PC-9 (cell line): ENCODE measurements at regions of chr7 and their contacts with region 1.

Region 1: DNA sequence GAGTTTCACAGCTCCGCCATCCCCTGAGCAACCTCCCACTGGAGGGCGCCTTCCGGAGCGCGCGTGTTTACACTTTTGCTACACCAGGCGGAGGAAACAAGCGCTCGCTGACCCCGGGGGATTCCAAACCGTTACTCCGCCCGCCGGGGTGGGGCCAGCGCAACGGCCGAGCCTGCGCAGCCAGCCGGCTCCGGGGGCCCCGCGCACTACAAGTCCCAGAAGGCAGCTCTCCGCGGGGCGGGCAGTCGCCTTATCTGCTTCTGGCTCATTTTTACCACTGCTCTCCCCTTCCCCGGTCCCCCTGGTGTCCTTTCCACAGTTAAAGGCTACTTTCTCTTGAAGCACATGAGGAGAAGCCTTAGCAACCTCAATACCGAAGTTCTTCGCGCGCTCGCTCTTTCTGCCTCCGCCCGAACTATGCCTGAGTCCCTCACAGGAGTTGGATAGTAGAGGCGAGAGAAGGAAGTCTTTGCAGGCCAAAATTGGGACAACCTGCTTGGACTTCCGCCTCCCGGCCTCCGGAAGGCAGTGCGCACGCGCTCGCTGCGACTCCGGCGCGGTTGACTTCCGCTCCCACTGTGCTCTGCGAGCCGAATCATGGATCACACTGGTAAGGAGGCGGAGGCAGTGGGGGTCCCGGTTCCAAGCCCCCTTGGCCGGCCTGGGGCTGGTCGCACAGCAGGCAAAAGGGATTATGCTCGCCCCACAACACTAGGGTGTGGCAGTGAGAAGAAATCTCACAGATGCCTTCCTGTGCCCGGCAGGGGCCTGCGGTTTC is at the start of gene CBLL1:
- DNase-seq: peak; percentile 84 to 98
- H3K4me3 ChIP-seq: peak within 1 kb of the TSS; percentile 72
- H3K27ac ChIP-seq: peak within 1 kb of the TSS; percentile 88
- H3K4me1 ChIP-seq: peaks cover 24% of the 10 kb centered on the region
- H3K27me3 ChIP-seq: no peaks in the 10 kb centered on the region
- CTCF ChIP-seq: no peak; the same call in none of the 2 replicates
- total RNA-seq, gene CBLL1: 24.5 and 31.3 TPM in 2 replicates

Region 2: DNA sequence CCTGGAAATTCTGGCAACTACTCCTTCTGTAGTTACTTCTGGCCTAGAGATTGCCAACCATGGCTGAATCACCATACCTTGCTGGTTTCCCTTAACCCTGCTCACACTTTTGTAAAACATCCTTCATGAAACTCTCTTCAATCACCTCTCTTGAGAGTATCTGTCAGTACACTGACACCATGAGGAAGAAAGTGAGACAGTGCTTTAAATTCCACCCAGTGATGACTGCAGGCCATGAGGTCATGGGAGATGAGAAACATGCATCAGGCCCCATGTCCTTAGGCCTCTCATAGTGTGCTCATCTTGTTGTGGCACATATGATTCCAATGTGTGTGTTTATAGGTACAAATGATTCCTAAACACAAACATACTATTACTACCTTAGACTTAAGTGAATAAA is 1434.4 kb before region 1 on chr7:
- CTCF ChIA-PET with region 1: no interaction called
- POLR2A ChIA-PET with region 1: no interaction called
- intact Hi-C with region 1: no loop called
- DNase-seq: no peak
- H3K4me3 ChIP-seq: no peak overlapping the region
- H3K27ac ChIP-seq: no peak overlapping the region
- H3K4me1 ChIP-seq: peaks cover 17% of the 10 kb centered on the region
- H3K27me3 ChIP-seq: no peaks in the 10 kb centered on the region
- CTCF ChIP-seq: no peak

Region 3: DNA sequence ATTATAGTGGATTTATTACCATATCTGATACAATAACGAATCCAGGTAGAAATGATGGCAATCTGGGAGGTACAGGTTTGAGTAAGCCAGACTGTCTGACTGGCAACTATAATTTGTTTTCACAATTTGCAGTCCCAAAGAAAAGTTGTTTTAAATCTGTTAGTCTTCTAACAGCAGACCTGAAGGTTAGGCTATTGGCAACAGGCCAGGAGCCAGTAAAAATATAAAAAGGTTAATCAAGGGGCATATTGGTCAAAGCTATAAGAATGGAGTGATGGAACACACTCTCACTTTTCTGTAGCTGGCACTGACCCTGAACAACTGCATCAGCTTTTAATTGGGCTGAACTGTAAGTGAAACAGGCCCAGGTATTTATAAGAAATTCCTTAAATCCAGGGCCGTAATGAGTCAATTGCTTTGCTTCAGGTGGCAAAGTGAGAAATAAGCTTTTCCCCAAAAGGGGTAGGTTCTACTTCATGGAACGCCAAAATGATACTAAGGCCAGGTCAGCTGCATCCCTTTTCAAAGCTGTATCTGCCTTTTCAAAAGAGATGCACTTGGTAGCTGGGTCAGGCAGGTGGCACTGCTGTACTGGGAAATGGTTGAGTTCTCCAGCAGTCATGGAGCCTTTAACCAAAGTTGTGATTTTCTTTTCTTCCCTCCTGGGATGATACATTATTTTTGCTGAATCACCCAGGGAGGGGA is 280.9 kb before region 1 on chr7:
- CTCF ChIA-PET with region 1: interaction called, 10 read pairs
- POLR2A ChIA-PET with region 1: no interaction called
- intact Hi-C with region 1: loop called (anchors 1 kb)
- DNase-seq: peak; percentile 60 to 65
- H3K4me3 ChIP-seq: no peak overlapping the region
- H3K27ac ChIP-seq: no peak overlapping the region
- H3K4me1 ChIP-seq: peaks cover 8% of the 10 kb centered on the region
- H3K27me3 ChIP-seq: no peaks in the 10 kb centered on the region
- CTCF ChIP-seq: peak; percentile 90

Region 4: DNA sequence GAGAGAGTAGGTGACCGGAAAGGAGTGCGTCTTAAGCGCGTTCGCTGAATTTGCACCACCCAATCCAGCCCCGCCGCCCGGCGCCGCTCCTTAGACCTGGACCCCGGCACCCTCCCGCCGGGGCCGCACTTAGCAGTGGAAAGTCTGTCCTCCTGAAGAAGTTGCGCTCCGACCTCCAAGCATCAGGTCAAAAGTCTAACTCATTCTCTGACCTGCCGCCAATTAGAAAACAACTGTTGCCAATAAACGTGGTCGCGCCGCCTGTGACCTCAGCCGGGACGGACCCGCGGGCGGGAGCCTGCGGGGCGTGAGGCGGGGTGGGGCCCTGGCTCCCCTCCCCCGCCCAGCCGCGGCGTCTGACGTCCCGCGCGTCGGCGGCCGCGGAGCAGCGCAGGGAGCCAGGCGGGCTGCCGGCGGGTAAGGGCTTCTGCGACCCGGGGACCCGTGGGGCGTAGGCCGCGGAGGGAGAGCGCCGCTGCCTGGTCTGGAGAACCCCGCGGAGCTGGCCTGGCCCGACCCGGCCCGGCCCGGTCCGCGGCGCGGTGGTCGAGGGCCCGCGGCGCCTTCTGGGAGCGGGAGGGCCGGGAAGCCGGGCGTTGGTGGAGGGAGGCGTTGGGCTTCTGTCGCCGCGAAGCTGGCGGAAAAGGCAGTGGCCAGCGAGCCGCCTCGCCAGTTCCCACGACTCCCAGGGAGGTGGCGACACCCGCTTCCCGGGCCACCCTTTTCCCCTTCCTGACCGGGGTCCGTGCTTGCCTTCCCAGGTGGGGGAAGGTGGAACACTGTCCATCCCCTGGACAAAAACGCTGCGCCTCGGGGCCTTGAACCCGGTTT is 163.7 kb before region 1 on chr7 and contains the start of gene BCAP29:
- CTCF ChIA-PET with region 1: no interaction called
- POLR2A ChIA-PET with region 1: interaction called, 4 read pairs
- intact Hi-C with region 1: loop called (anchors 1 kb)
- DNase-seq: peak; percentile 62 to 81
- H3K4me3 ChIP-seq: peak within 1 kb of the TSS; percentile 89
- H3K27ac ChIP-seq: peak within 1 kb of the TSS; percentile 69
- H3K4me1 ChIP-seq: peaks cover 25% of the 10 kb centered on the region
- H3K27me3 ChIP-seq: no peaks in the 10 kb centered on the region
- CTCF ChIP-seq: 0 out of 2 replicates have a peak, but pooled peaks have one; percentile 28
- total RNA-seq, gene BCAP29: 45.5 and 58.3 TPM in 2 replicates

Region 5: DNA sequence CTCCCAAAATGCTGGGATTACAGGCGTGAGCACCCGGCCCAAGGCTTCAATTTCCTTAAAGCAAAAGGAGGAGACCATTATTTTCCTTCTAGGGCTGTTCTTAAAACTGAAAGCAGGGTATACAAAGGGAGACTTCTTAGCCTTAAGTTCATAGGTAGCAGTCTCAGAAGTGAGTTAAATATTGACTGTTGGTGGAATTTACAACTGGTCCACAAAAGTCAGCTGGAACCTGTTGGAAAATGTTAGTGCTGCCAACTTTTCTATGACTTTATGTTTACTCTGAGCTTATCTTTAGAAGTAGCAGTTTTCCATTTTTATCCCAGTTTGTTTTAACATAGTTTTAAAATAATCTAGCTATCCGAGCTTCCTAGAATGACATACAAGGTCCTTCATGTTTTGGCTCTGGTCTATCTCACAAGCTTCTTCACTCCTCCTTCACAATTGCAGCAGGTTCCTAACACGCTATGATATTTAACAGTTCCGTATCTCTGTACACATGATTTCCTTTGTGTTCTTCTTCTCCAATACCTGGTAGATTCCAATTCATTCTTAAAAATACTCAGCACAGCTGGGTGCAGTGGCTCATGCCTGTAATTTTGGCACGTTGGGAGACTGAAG is 56.0 kb after region 1 on chr7:
- CTCF ChIA-PET with region 1: no interaction called
- POLR2A ChIA-PET with region 1: no interaction called
- intact Hi-C with region 1: no loop called
- DNase-seq: no peak
- H3K4me3 ChIP-seq: no peak overlapping the region
- H3K27ac ChIP-seq: no peak overlapping the region
- H3K4me1 ChIP-seq: no peaks in the 10 kb centered on the region
- H3K27me3 ChIP-seq: no peaks in the 10 kb centered on the region
- CTCF ChIP-seq: no peak

Region 6: DNA sequence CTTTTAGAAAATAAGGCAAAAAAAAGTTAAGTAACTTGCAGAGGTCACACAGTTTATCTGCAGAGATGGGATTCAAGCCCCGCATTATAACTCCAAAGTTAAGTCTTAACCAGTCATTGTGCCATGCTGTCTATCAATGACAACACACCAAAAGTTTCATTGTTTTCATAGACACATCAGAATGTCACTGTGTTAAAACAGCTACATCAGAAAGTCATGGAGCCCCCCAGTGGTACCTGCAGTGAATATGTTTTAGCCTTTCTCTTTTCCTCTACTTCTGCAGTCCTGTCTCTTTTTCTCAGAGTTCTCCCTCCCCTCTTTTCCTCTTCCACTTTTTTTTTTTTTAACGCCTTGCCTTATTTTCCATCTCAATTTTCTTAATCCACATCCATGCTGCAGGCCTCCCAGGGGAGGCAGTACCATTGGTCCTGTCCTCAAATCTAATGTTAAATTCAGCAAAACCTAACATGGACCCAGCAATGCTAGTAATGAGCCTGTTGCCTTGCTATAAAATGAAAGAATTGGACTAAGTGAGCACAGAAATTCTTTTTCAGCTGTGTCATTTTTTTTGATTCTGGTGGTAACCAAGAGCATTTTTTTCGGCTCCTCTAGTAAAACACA is 716.3 kb after region 1 on chr7:
- CTCF ChIA-PET with region 1: interaction called, 12 read pairs
- POLR2A ChIA-PET with region 1: no interaction called
- intact Hi-C with region 1: no loop called
- DNase-seq: peak in 1 of 2 experiments; percentile 38
- H3K4me3 ChIP-seq: no peak overlapping the region
- H3K27ac ChIP-seq: no peak overlapping the region
- H3K4me1 ChIP-seq: 0 out of 2 replicates have a peak, but pooled peaks cover 10% of the 10 kb centered on the region
- H3K27me3 ChIP-seq: no peaks in the 10 kb centered on the region
- CTCF ChIP-seq: peak; percentile 71